ENCODE measurements at regions of chr10 and their contacts with region 1.

Region 1: DNA sequence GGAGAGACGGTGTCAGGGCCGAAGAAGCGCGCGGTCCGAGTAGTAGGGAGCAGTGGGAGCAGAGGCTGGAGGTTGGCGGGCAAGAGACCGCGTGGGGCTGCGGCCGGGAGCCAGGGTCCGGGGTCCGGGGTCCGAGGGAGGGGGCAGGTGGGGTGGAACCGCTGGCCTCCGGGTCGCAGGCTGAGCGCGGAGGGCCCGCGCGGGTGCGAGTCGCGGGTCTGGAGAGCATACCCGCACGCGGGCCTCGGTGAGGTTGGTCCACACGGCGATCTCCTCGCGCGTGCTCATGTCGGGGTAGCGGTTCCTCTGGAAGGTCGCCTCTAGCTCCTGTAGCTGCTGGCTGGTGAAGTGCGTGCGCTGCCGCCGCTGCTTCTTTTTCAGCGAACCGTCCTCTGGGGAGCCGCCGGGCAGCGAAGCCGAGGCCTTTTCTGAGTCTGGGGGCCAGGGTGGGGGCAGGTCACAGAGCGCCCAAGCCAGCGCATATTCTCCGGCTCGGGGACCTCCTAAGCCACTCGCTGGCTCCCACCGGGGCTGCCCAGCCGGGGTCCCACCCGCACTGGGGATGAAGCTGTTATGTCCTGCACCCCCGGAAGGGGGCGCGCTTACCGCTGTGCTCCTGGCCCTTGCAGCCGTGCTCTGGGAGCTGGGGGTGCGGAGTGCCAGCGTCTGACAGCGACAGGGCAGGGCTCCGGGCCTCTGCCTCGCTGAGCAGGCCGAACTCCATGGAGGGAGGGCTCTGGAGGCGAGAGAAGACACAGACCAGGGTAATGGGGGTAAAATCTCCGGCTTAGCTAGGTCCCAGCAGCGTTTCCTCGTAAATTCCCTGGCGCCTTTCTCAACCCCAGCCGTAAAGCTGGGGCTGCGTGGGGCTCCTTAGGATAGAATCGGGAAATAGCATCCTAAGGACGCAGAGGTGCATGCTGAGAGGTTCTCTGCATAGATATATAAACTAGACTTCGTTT is 5.5 kb downstream of the ELOVL3 start:
- DNase-seq: peak; percentile 68 to 94
- ATAC-seq: peak; percentile 43 to 82
- H3K4me3 ChIP-seq: peak overlapping the region; percentile 47
- H3K27ac ChIP-seq: peak overlapping the region; percentile 7 to 72; a peak in 3 of 6 replicates
- H3K4me1 ChIP-seq: peaks cover 27% of the 10 kb centered on the region
- CTCF ChIP-seq: peak; percentile 90
- EP300 ChIP-seq: no peak
- POLR2A ChIP-seq: no peak
- RAD21 ChIP-seq: peak; percentile 59 to 66

Region 2: GRCh38 chr10:101244321-101245050 is 987.2 kb before region 1 on chr10:
- CTCF ChIA-PET with region 1: no interaction called
- POLR2A ChIA-PET with region 1: no interaction called
- DNase-seq: peak; percentile 60 to 72
- ATAC-seq: peak; percentile 65 to 87; a peak in 5 of 6 replicates
- H3K4me3 ChIP-seq: no peak overlapping the region
- H3K27ac ChIP-seq: peak overlapping the region; percentile 37 to 70; a peak in 5 of 6 replicates
- H3K4me1 ChIP-seq: peaks cover 13% of the 10 kb centered on the region
- CTCF ChIP-seq: no peak
- EP300 ChIP-seq: no peak
- POLR2A ChIP-seq: no peak
- RAD21 ChIP-seq: no peak

Region 3: DNA sequence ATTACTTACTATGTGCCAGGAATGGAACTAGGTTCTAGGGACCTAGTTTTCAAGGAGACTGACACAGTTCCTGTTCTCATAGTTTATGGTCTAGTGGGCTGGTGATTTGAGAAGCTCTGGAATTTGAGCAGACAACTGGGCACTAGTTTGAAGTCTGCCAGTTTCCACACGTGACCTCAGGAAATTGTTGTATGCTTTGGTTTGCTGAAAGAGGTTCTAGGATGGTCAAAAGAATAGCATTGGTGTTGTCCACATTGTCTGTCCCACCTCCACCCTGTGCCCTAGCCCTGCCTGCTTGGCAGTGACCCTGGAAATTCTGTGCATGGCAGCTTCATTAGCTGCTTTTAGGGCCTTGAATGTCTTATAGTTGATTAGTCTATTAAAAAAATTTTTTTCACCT is 42.4 kb after region 1 on chr10:
- CTCF ChIA-PET with region 1: interaction called, 39 read pairs
- POLR2A ChIA-PET with region 1: no interaction called
- DNase-seq: no peak
- ATAC-seq: no peak
- H3K4me3 ChIP-seq: no peak overlapping the region
- H3K27ac ChIP-seq: no peak overlapping the region
- H3K4me1 ChIP-seq: no peaks in the 10 kb centered on the region
- CTCF ChIP-seq: no peak
- EP300 ChIP-seq: no peak
- POLR2A ChIP-seq: no peak
- RAD21 ChIP-seq: no peak